Panc1 (cell line): ENCODE measurements at regions of chr7 and their contacts with region 1.

Region 1: GRCh38 chr7:139645572-139646523 is 122.4 kb downstream of the CLEC2L start:
- DNase-seq: peak; percentile 69
- ATAC-seq: peak; percentile 84
- H3K4me3 ChIP-seq: no peak overlapping the region
- H3K27ac ChIP-seq: no peak overlapping the region
- H3K4me1 ChIP-seq: peaks cover 19% of the 10 kb centered on the region
- H3K27me3 ChIP-seq: no peaks in the 10 kb centered on the region
- CTCF ChIP-seq: peak; percentile 93

Region 2: DNA sequence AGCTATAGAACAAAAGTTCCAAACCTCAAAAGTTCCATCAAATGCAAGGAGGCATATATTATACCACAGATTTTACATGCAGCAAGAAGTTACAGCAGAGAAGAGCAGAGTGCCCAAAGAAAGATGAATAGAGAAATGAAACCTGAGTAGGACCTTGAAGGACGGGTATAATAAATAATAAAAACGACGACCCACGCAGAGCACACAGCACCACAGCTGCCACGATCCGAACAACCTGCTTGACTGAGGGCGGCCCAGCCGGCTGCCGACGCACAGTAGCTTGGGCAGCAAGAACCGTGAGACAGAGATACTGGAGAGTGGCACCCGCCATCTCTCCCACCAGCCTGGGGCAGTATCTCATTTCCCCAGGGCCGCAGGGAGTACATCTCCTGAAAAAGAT is 53.0 kb after region 1 on chr7:
- CTCF ChIA-PET with region 1: interaction called, 16 read pairs
- POLR2A ChIA-PET with region 1: no interaction called
- in situ Hi-C with region 1: no loop called
- intact Hi-C with region 1: no loop called
- DNase-seq: no peak
- ATAC-seq: no peak
- H3K4me3 ChIP-seq: no peak overlapping the region
- H3K27ac ChIP-seq: no peak overlapping the region
- H3K4me1 ChIP-seq: peaks cover 5% of the 10 kb centered on the region; the same call in 1 of the 2 replicates
- H3K27me3 ChIP-seq: no peaks in the 10 kb centered on the region
- CTCF ChIP-seq: no peak

Region 3: GRCh38 chr7:139775829-139776266 is 130.0 kb after region 1 on chr7:
- CTCF ChIA-PET with region 1: interaction called, 7 read pairs
- POLR2A ChIA-PET with region 1: no interaction called
- in situ Hi-C with region 1: no loop called
- intact Hi-C with region 1: loop called (anchors 2 kb)
- DNase-seq: peak; percentile 75
- ATAC-seq: peak; percentile 64
- H3K4me3 ChIP-seq: peak overlapping the region; percentile 93 to 95
- H3K27ac ChIP-seq: peak overlapping the region; percentile 95
- H3K4me1 ChIP-seq: peaks cover 28% of the 10 kb centered on the region
- H3K27me3 ChIP-seq: no peaks in the 10 kb centered on the region; the same call in 1 of the 2 replicates
- CTCF ChIP-seq: peak; percentile 87

Region 4: DNA sequence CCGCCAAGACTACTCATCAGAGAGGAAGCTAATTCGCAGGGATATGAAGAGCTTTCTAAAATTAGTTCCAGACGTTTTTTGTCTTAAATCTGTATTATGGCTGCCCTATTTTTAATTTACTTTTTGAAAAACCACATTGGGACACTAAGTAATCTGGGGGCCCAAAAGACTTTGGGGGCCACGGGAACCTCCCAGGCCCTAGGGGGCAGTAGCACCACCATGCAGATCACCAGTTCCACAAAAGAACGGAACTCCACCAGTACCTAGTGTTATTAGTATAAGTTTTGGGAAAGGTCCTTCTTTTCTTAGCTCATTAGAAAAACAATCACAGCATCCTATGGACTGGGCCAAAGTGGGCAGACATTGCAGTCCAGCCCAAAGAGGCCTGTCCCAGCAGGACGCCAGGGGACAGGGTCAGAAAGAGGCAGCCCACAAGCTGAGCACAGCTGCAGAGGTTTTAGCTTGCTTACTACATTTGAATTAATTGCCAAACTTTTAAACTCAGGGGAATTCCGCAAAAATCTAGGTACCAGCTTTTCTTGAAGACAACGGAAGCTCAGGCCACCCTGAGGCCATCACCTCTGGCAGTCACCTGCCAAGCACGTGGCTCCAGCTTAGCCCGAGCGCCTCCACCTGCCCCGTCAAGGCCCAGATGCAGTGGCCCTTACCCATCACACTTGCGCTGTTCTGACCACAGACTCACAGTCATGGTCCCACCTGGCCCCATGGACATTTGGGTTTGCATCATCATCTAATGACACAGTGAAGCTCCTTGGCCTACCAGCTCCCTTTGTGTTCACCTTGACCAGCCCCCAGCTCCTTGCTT is 342.1 kb after region 1 on chr7:
- CTCF ChIA-PET with region 1: interaction called, 11 read pairs
- POLR2A ChIA-PET with region 1: no interaction called
- in situ Hi-C with region 1: no loop called
- intact Hi-C with region 1: no loop called
- DNase-seq: no peak
- ATAC-seq: no peak
- H3K4me3 ChIP-seq: no peak overlapping the region
- H3K27ac ChIP-seq: no peak overlapping the region
- H3K4me1 ChIP-seq: no peaks in the 10 kb centered on the region
- H3K27me3 ChIP-seq: peaks cover 3% of the 10 kb centered on the region; the same call in 1 of the 2 replicates
- CTCF ChIP-seq: no peak

Region 5: GRCh38 chr7:140003913-140004382 is 358.1 kb after region 1 on chr7:
- CTCF ChIA-PET with region 1: interaction called, 11 read pairs
- POLR2A ChIA-PET with region 1: no interaction called
- in situ Hi-C with region 1: no loop called
- intact Hi-C with region 1: loop called (anchors 2 kb)
- DNase-seq: peak; percentile 35
- ATAC-seq: peak; percentile 50; the same call in 1 of the 2 replicates
- H3K4me3 ChIP-seq: no peak overlapping the region
- H3K27ac ChIP-seq: no peak overlapping the region
- H3K4me1 ChIP-seq: peaks cover 4% of the 10 kb centered on the region; the same call in 1 of the 2 replicates
- H3K27me3 ChIP-seq: no peaks in the 10 kb centered on the region
- CTCF ChIP-seq: peak; percentile 82